ENCODE measurements at regions of chr4 and their contacts with region 1.

Region 1: GRCh38 chr4:150209140-150209829 is 131.0 kb downstream of the DCLK2 start:
- DNase-seq: peak; percentile 45 to 78 (median 65)
- H3K4me3 ChIP-seq: no peak overlapping the region
- H3K27ac ChIP-seq: no peak overlapping the region
- H3K4me1 ChIP-seq: peaks cover 2% of the 10 kb centered on the region
- H3K27me3 ChIP-seq: no peaks in the 10 kb centered on the region
- CTCF ChIP-seq: peak in 2 of 3 donors; percentile 12 to 45
- EP300 ChIP-seq: no peak
- POLR2A ChIP-seq: no peak

Region 2: GRCh38 chr4:150078637-150079581 is 130.4 kb before region 1 on chr4:
- intact Hi-C with region 1: loop called in 2 of 4 experiments (anchors 10 kb)
- DNase-seq: peak; percentile 55 to 80 (median 66)
- H3K4me3 ChIP-seq: peak overlapping the region; percentile 57
- H3K27ac ChIP-seq: peak overlapping the region; percentile 83 to 93
- H3K4me1 ChIP-seq: peaks cover 4% of the 10 kb centered on the region
- H3K27me3 ChIP-seq: no peaks in the 10 kb centered on the region
- CTCF ChIP-seq: no peak
- EP300 ChIP-seq: no peak
- POLR2A ChIP-seq: no peak